IMR-90 (cell line): ENCODE measurements at regions of chr20 and their contacts with region 1.

Region 1: GRCh38 chr20:17969884-17970409 is 1.1 kb downstream of the MGME1 start:
- DNase-seq: peak; percentile 70
- ATAC-seq: no peak
- H3K4me3 ChIP-seq: peak overlapping the region; percentile 83
- H3K27ac ChIP-seq: peak overlapping the region; percentile 96
- H3K4me1 ChIP-seq: peaks cover 10% of the 10 kb centered on the region
- H3K27me3 ChIP-seq: no peaks in the 10 kb centered on the region
- CTCF ChIP-seq: no peak
- POLR2A ChIP-seq: no peak; the same call in 1 of the 2 replicates
- RAD21 ChIP-seq: no peak

Region 2: GRCh38 chr20:17771206-17772004 is 198.5 kb before region 1 on chr20:
- CTCF ChIA-PET with region 1: no interaction called
- POLR2A ChIA-PET with region 1: no interaction called
- dilution Hi-C with region 1: no loop called
- in situ Hi-C with region 1: no loop called
- intact Hi-C with region 1: no loop called
- DNase-seq: no peak
- ATAC-seq: no peak
- H3K4me3 ChIP-seq: no peak overlapping the region
- H3K27ac ChIP-seq: no peak overlapping the region
- H3K4me1 ChIP-seq: no peaks in the 10 kb centered on the region
- H3K27me3 ChIP-seq: peaks cover 1% of the 10 kb centered on the region; the same call in 1 of the 2 replicates
- CTCF ChIP-seq: no peak
- POLR2A ChIP-seq: no peak
- RAD21 ChIP-seq: no peak

Region 3: GRCh38 chr20:17843246-17844132 is 126.5 kb before region 1 on chr20:
- CTCF ChIA-PET with region 1: no interaction called
- POLR2A ChIA-PET with region 1: interaction called, 16 read pairs
- dilution Hi-C with region 1: no loop called
- in situ Hi-C with region 1: no loop called
- intact Hi-C with region 1: no loop called
- DNase-seq: peak; percentile 97
- ATAC-seq: peak; percentile 87
- H3K4me3 ChIP-seq: no peak overlapping the region; the same call in 1 of the 2 replicates
- H3K27ac ChIP-seq: peak overlapping the region; percentile 90
- H3K4me1 ChIP-seq: peaks cover 24% of the 10 kb centered on the region
- H3K27me3 ChIP-seq: no peaks in the 10 kb centered on the region
- CTCF ChIP-seq: no peak
- POLR2A ChIP-seq: no peak; the same call in 1 of the 2 replicates
- RAD21 ChIP-seq: peak; percentile 23; the same call in 1 of the 2 replicates

Region 4: GRCh38 chr20:17990278-17990972 is 20.5 kb after region 1 on chr20:
- CTCF ChIA-PET with region 1: no interaction called
- POLR2A ChIA-PET with region 1: no interaction called
- dilution Hi-C with region 1: no loop called
- in situ Hi-C with region 1: no loop called
- intact Hi-C with region 1: loop called (anchors 2 kb)
- DNase-seq: peak; percentile 58
- ATAC-seq: peak; percentile 69
- H3K4me3 ChIP-seq: no peak overlapping the region
- H3K27ac ChIP-seq: no peak overlapping the region
- H3K4me1 ChIP-seq: peaks cover 4% of the 10 kb centered on the region; the same call in 1 of the 2 replicates
- H3K27me3 ChIP-seq: no peaks in the 10 kb centered on the region
- CTCF ChIP-seq: no peak
- POLR2A ChIP-seq: no peak
- RAD21 ChIP-seq: no peak

Region 5: GRCh38 chr20:18137412-18138265 is 167.7 kb after region 1 on chr20 and contains the starts of genes KAT14 and PET117:
- CTCF ChIA-PET with region 1: no interaction called
- POLR2A ChIA-PET with region 1: no interaction called
- dilution Hi-C with region 1: no loop called
- in situ Hi-C with region 1: no loop called
- intact Hi-C with region 1: loop called (anchors 2 kb)
- DNase-seq: peak; percentile 89
- ATAC-seq: peak; percentile 96
- H3K4me3 ChIP-seq: peak within 1 kb of the TSS; percentile 99
- H3K27ac ChIP-seq: peak within 1 kb of the TSS; percentile 94
- H3K4me1 ChIP-seq: peaks cover 2% of the 10 kb centered on the region; the same call in 1 of the 2 replicates
- H3K27me3 ChIP-seq: peaks cover 4% of the 10 kb centered on the region; the same call in 1 of the 2 replicates
- CTCF ChIP-seq: no peak
- POLR2A ChIP-seq: peak; percentile 42; the same call in 1 of the 2 replicates
- RAD21 ChIP-seq: no peak
- total RNA-seq, gene KAT14: 12.4 and 15.3 TPM in 2 replicates
- total RNA-seq, gene PET117: 3.9 and 12.8 TPM in 2 replicates